Aorta (tissue), 5 donors: ENCODE measurements at regions of chr18 and their contacts with region 1.

Region 1: DNA sequence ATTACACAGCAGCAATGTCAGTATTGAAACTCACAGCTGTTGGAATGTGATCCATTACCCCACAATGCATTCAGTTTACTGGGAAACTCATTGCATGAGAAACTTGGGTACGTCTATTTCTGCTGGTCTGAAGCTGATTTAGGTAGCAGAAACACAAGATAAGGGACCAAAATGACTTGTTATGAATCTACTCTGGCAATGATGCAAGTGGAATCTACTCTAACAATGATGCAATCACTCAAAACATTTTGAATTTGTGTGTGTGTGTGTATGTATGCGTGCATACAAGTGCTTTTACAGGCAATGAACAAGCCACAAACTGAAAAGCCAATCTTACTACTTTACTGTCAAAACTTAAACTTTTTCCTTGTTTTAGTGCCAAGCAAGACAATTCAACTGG is 406.7 kb downstream of the ADCYAP1 start:
- DNase-seq: no peak
- ATAC-seq: no peak
- H3K4me3 ChIP-seq: no peak overlapping the region
- H3K27ac ChIP-seq: no peak overlapping the region
- H3K4me1 ChIP-seq: no peaks in the 10 kb centered on the region
- H3K27me3 ChIP-seq: no peaks in the 10 kb centered on the region

Region 2: DNA sequence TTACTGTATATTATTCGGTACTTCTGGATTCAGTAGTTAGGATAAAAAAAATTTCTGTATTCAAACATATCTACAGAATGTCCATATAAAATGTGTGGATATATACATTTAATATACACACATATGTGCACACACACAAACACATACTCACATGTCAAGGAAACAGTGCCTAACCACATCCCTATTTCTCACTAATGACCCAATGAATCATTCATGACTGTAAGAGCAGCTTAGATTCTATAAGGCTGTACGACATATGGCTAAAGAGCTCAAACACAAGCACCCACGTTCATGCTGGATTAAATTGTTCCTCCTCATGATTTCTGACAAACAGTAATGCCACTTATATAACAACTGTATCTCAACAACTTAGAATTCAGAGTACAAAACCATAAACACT is 50.6 kb after region 1 on chr18:
- intact Hi-C with region 1: loop called in 1 of 2 experiments (anchors 5 kb)
- DNase-seq: no peak
- ATAC-seq: no peak
- H3K4me3 ChIP-seq: no peak overlapping the region
- H3K27ac ChIP-seq: no peak overlapping the region
- H3K4me1 ChIP-seq: no peaks in the 10 kb centered on the region
- H3K27me3 ChIP-seq: no peaks in the 10 kb centered on the region

Region 3: GRCh38 chr18:1464444-1465217 is 153.3 kb after region 1 on chr18:
- intact Hi-C with region 1: no loop called
- DNase-seq: no peak
- ATAC-seq: no peak
- H3K4me3 ChIP-seq: no peak overlapping the region
- H3K27ac ChIP-seq: no peak overlapping the region
- H3K4me1 ChIP-seq: no peaks in the 10 kb centered on the region
- H3K27me3 ChIP-seq: no peaks in the 10 kb centered on the region

Region 4: GRCh38 chr18:1624610-1625009 is 313.2 kb after region 1 on chr18:
- intact Hi-C with region 1: no loop called
- DNase-seq: no peak
- ATAC-seq: no peak
- H3K4me3 ChIP-seq: no peak overlapping the region
- H3K27ac ChIP-seq: no peak overlapping the region
- H3K4me1 ChIP-seq: no peaks in the 10 kb centered on the region
- H3K27me3 ChIP-seq: no peaks in the 10 kb centered on the region